ENCODE measurements at regions of chr1 and their contacts with region 1.

Region 1: GRCh38 chr1:101288491-101288944 is 51.7 kb downstream of the S1PR1 start:
- DNase-seq: peak in 6 of 10 donors; percentile 16 to 66 (median 49)

Region 2: GRCh38 chr1:100921109-100921706 is 367.3 kb before region 1 on chr1:
- intact Hi-C with region 1: loop called (anchors 2 kb)
- DNase-seq: no peak

Region 3: GRCh38 chr1:101136739-101137138 is 151.8 kb before region 1 on chr1:
- intact Hi-C with region 1: loop called (anchors 5 kb)
- DNase-seq: no peak

Region 4: GRCh38 chr1:101167891-101168290 is 120.6 kb before region 1 on chr1:
- intact Hi-C with region 1: no loop called
- DNase-seq: no peak

Region 5: DNA sequence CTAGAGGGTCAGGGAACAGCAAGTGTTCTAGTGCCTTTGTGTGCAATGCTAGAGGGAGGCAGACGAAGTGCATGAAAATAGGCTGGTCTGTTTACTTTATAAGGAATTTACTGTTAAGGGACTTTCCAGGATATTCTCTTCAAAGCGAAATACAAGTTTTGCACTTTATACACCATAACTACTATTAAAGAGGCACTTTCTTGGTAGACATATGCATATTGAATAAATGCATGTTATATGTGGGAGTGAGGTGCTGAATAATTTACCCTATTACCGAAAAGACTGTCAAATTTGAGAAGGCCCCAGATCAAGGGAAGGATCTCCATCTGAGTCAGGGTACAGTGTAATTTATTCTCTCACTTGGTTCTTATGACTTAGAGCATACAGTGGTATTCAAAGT is 258.8 kb after region 1 on chr1:
- intact Hi-C with region 1: no loop called
- DNase-seq: no peak